ENCODE measurements at regions of chr16 and their contacts with region 1.

Region 1: GRCh38 chr16:24800586-24800985 is 45.2 kb upstream of the SLC5A11 start:
- DNase-seq: peak; percentile 19 to 46
- H3K4me3 ChIP-seq: no peak overlapping the region
- H3K4me3 Mint-ChIP-seq: peak overlapping the region; percentile 14
- H3K27ac Mint-ChIP-seq: peak overlapping the region; percentile 37
- H3K4me1 ChIP-seq: peaks cover 6% of the 10 kb centered on the region; the same call in 1 of the 2 replicates
- H3K4me1 Mint-ChIP-seq: peaks cover 30% of the 10 kb centered on the region
- H3K27me3 ChIP-seq: no peaks in the 10 kb centered on the region
- H3K27me3 Mint-ChIP-seq: no peaks in the 10 kb centered on the region
- CTCF ChIP-seq: peak in 1 of 2 experiments; percentile 18

Region 2: GRCh38 chr16:24580665-24581064 is 219.9 kb before region 1 on chr16:
- CTCF ChIA-PET with region 1: no interaction called
- POLR2A ChIA-PET with region 1: no interaction called
- intact Hi-C with region 1: loop called (anchors 10 kb)
- DNase-seq: no peak
- H3K4me3 ChIP-seq: no peak overlapping the region
- H3K4me3 Mint-ChIP-seq: no peak overlapping the region
- H3K27ac Mint-ChIP-seq: no peak overlapping the region
- H3K4me1 ChIP-seq: no peaks in the 10 kb centered on the region
- H3K4me1 Mint-ChIP-seq: no peaks in the 10 kb centered on the region
- H3K27me3 ChIP-seq: no peaks in the 10 kb centered on the region
- H3K27me3 Mint-ChIP-seq: no peaks in the 10 kb centered on the region
- CTCF ChIP-seq: no peak

Region 3: DNA sequence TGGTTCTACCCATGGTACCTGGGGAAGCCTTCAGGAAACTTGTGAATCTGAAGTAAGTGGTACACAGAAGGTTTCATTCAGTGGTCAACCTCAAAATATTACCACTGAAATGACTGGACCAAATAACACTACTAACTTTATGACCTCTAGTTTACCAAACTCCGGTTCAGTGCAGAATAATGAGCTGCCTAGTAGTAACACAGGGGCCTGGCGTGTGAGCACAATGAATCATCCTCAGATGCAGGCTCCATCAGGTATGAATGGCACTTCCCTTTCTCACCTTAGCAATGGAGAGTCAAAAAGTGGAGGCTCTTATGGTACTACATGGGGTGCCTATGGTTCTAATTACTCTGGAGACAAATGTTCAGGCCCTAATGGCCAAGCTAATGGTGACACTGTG is 10.7 kb before region 1 on chr16:
- CTCF ChIA-PET with region 1: no interaction called
- POLR2A ChIA-PET with region 1: no interaction called
- intact Hi-C with region 1: no loop called
- DNase-seq: no peak
- H3K4me3 ChIP-seq: no peak overlapping the region
- H3K4me3 Mint-ChIP-seq: no peak overlapping the region
- H3K27ac Mint-ChIP-seq: no peak overlapping the region
- H3K4me1 ChIP-seq: no peaks in the 10 kb centered on the region
- H3K4me1 Mint-ChIP-seq: no peaks in the 10 kb centered on the region
- H3K27me3 ChIP-seq: no peaks in the 10 kb centered on the region
- H3K27me3 Mint-ChIP-seq: no peaks in the 10 kb centered on the region
- CTCF ChIP-seq: no peak

Measured in Caco-2 (cell line).